ENCODE measurements at regions of chrX and their contacts with region 1.

Region 1: GRCh38 chrX:2595258-2595657 is 94.5 kb upstream of the DHRSX start:
- DNase-seq: no peak
- H3K4me3 Mint-ChIP-seq: no peak overlapping the region
- H3K27ac Mint-ChIP-seq: no peak overlapping the region
- H3K4me1 Mint-ChIP-seq: peaks cover 2% of the 10 kb centered on the region
- H3K27me3 Mint-ChIP-seq: no peaks in the 10 kb centered on the region

Region 2: DNA sequence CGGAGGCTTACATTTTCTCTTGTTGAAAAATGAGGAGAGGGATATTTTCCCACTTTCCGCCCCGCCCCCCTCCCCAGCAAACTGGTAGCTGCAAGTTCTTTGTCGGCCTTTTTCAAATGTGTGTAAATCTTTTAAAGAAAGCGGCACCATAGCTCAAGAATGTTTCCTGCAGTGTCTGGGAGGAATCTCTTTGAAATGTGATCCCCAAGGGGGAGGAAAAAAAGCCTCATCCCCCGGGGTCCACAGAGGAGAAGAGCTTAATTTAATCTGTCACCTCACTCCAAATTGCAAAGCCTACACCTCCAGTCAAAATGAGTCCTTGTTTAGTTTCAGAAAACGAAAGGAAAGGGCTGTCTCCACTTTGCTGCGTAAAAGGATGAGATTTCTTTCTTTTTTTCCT is 945.6 kb before region 1 on chrX:
- CTCF ChIA-PET with region 1: no interaction called
- POLR2A ChIA-PET with region 1: no interaction called
- intact Hi-C with region 1: loop called (anchors 1 kb)
- DNase-seq: no peak
- H3K4me3 Mint-ChIP-seq: no peak overlapping the region
- H3K27ac Mint-ChIP-seq: no peak overlapping the region
- H3K4me1 Mint-ChIP-seq: peaks cover 6% of the 10 kb centered on the region
- H3K27me3 Mint-ChIP-seq: peaks cover 10% of the 10 kb centered on the region

Region 3: DNA sequence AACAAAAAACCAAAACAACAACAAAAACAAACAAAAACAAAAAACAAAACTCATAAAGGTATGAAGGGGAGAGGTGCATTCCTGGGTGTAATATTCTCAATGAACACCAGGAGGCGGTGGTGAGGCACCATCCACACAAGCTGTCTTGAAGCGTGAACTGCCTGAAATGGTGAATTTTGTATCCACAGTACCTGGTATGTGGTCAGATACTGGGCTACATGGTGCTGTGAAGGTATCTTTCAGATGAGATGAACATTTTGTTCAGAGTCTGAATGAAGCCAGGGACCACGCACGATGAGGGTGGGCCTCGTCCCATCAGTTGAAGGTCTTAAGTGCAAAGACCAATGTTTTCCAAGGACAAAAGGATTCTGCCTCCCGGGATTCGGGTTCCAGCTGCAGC is 921.9 kb before region 1 on chrX:
- CTCF ChIA-PET with region 1: no interaction called
- POLR2A ChIA-PET with region 1: no interaction called
- intact Hi-C with region 1: loop called (anchors 1 kb)
- DNase-seq: peak; percentile 59
- H3K4me3 Mint-ChIP-seq: no peak overlapping the region
- H3K27ac Mint-ChIP-seq: no peak overlapping the region
- H3K4me1 Mint-ChIP-seq: no peaks in the 10 kb centered on the region
- H3K27me3 Mint-ChIP-seq: no peaks in the 10 kb centered on the region